Prostate gland (tissue), 2 donors: ENCODE measurements at regions of chr3 and their contacts with region 1.

Region 1: DNA sequence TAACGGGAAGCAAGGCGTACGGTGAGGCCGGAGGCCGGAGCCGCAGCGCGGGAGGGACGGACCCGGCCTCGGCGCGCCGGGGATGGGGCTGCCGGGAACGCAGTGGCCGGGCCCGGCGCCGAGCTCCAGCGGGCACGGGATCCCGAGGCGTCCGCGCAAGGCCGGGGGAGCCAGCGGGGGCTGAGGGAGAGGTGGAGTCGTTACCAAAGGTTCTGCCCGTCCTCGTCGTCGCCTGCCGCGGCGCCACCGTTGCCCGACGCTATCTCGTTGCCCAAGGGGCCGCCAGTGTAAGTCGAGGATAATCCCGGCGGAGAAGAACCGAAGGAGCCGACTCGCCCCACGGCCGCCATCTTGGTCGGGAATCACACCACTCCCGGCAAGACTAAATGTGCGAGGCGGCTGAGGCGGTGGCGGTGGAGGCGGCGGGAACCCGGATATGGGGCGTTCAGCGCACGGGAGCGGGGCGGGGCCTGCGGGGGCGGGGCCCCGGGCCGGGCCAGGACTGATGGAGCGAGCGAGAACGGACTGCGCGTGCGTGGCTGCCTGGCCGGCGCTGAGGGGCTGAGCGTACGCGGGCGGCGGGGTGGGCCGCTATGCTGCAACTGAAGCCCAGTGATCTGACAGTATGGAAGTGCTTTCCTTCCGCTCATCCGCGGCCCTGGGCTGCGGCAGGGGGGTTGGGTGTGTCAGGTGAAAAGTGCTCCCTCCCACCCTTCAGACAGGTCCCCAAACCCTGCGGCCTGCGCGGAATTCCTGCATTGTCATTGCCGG is at the start of gene DYNC1LI1:
- DNase-seq: peak; percentile 96
- H3K4me3 ChIP-seq: peak within 1 kb of the TSS; percentile 90 to 91
- H3K27ac ChIP-seq: peak within 1 kb of the TSS; percentile 97
- H3K4me1 ChIP-seq: no peaks in the 10 kb centered on the region
- H3K27me3 ChIP-seq: no peaks in the 10 kb centered on the region
- CTCF ChIP-seq: no peak
- POLR2A ChIP-seq: peak; percentile 63
- total RNA-seq, gene DYNC1LI1: 30.5 to 43.3 TPM

Region 2: DNA sequence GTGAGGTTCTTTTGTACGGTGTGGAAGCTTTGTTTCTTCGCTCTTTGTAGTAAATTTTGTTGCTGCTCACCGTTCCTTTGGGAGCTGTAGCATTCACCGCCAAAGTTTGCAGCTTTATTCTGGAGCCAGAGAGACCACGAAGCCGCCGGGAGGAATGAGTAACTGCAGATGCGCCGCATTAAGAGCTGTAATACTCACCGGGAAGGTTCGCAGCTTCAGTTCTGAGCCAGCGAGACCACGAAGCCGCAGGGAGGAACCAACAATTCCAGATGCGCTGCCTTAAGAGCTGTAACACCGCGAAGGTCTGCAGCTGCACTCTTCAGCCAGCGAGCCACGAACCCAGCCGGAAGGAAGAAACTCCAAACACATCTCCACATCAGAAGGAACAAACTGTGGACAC is 56.0 kb after region 1 on chr3:
- intact Hi-C with region 1: no loop called
- DNase-seq: no peak
- H3K4me3 ChIP-seq: no peak overlapping the region
- H3K27ac ChIP-seq: no peak overlapping the region
- H3K4me1 ChIP-seq: no peaks in the 10 kb centered on the region
- H3K27me3 ChIP-seq: no peaks in the 10 kb centered on the region
- CTCF ChIP-seq: no peak
- POLR2A ChIP-seq: no peak

Region 3: GRCh38 chr3:32684800-32685542 is 114.4 kb after region 1 on chr3 and contains the start of gene CNOT10:
- intact Hi-C with region 1: loop called (anchors 10 kb)
- DNase-seq: peak; percentile 92
- H3K4me3 ChIP-seq: peak within 1 kb of the TSS; percentile 72 to 79
- H3K27ac ChIP-seq: peak within 1 kb of the TSS; percentile 83 to 85
- H3K4me1 ChIP-seq: peaks cover 2% of the 10 kb centered on the region
- H3K27me3 ChIP-seq: no peaks in the 10 kb centered on the region
- CTCF ChIP-seq: peak in 3 of 4 experiments; percentile 20 to 41 (median 33)
- POLR2A ChIP-seq: peak; percentile 67
- total RNA-seq, gene CNOT10: 26.1 to 40.0 TPM